Activated CD8-positive, alpha-beta T cell treated with anti-CD3 and anti-CD28 coated beads for 36 hours (primary cell): ENCODE measurements at regions of chr20 and their contacts with region 1.

Region 1: DNA sequence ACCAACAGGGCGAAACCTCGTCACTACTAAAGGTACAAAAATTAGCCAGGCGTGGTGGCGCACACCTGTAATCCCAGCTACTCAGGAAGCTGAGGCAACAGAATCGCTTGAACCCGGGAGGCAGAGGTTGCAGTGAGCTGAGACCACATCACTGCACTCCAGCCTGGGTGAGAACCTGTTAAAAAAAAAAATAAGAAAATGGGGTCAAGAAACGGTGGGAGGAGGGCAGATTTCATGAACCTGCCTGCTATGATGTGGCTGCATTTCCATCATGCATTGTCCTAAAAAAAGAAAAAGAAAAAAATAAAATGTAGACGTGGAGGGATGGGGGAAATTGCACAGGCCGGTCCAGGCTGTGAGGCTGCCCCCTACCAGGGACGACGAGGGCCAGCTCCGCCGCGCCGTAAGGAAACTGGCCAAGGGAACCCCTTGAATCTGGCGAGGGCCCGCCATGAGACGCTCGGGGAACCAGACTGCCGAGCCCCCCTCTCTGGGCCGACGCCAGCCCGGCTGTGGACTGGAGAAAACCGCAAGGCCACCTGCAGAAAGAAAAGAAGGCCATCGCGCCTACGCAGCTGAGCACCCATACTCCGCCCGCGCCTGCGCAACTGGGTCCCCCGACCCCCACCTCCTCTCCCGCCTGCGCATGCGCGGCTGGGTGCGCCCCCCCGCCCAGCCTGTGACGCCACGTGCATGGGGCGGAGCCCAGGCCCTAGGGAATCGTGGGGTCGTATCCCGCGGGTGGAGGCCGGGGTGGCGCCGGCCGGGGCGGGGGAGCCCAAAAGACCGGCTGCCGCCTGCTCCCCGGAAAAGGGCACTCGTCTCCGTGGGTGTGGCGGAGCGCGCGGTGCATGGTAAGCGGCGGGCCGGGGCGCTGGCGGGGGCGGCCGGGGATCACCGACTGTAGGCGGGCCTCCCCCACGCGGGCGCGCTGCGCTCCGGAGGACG is at the start of gene ENTPD6:
- DNase-seq: peak; percentile 92
- ATAC-seq: peak; percentile 86
- H3K4me3 Mint-ChIP-seq: peak within 1 kb of the TSS; percentile 89
- H3K27ac Mint-ChIP-seq: peak within 1 kb of the TSS; percentile 82
- H3K4me1 Mint-ChIP-seq: peaks cover 32% of the 10 kb centered on the region
- H3K27me3 Mint-ChIP-seq: no peaks in the 10 kb centered on the region
- CTCF ChIP-seq: no peak
- total RNA-seq, gene ENTPD6: 39.4 to 42.8 TPM

Region 2: GRCh38 chr20:25247956-25248785 is 52.9 kb after region 1 on chr20 and contains the start of gene PYGB:
- CTCF ChIA-PET with region 1: no interaction called
- POLR2A ChIA-PET with region 1: interaction called, 15 read pairs
- intact Hi-C with region 1: no loop called
- DNase-seq: peak; percentile 76
- ATAC-seq: peak; percentile 88
- H3K4me3 Mint-ChIP-seq: peak within 1 kb of the TSS; percentile 89
- H3K27ac Mint-ChIP-seq: peak within 1 kb of the TSS; percentile 91
- H3K4me1 Mint-ChIP-seq: peaks cover 53% of the 10 kb centered on the region
- H3K27me3 Mint-ChIP-seq: peaks cover 7% of the 10 kb centered on the region
- CTCF ChIP-seq: no peak
- total RNA-seq, gene PYGB: 26.1 to 26.5 TPM

Region 3: GRCh38 chr20:25254986-25255680 is 59.8 kb after region 1 on chr20:
- CTCF ChIA-PET with region 1: interaction called, 5 read pairs
- POLR2A ChIA-PET with region 1: interaction called, 5 read pairs
- intact Hi-C with region 1: loop called (anchors 5 kb)
- DNase-seq: no peak
- ATAC-seq: no peak
- H3K4me3 Mint-ChIP-seq: no peak overlapping the region
- H3K27ac Mint-ChIP-seq: no peak overlapping the region
- H3K4me1 Mint-ChIP-seq: peaks cover 75% of the 10 kb centered on the region
- H3K27me3 Mint-ChIP-seq: no peaks in the 10 kb centered on the region
- CTCF ChIP-seq: no peak

Region 4: GRCh38 chr20:25341716-25342680 is 146.7 kb after region 1 on chr20:
- CTCF ChIA-PET with region 1: no interaction called
- POLR2A ChIA-PET with region 1: no interaction called
- intact Hi-C with region 1: no loop called
- DNase-seq: no peak
- ATAC-seq: no peak
- H3K4me3 Mint-ChIP-seq: no peak overlapping the region
- H3K27ac Mint-ChIP-seq: no peak overlapping the region
- H3K4me1 Mint-ChIP-seq: peaks cover 27% of the 10 kb centered on the region
- H3K27me3 Mint-ChIP-seq: no peaks in the 10 kb centered on the region
- CTCF ChIP-seq: no peak